Pancreas (tissue), 10 donors: ENCODE measurements at regions of chr17 and their contacts with region 1.

Region 1: DNA sequence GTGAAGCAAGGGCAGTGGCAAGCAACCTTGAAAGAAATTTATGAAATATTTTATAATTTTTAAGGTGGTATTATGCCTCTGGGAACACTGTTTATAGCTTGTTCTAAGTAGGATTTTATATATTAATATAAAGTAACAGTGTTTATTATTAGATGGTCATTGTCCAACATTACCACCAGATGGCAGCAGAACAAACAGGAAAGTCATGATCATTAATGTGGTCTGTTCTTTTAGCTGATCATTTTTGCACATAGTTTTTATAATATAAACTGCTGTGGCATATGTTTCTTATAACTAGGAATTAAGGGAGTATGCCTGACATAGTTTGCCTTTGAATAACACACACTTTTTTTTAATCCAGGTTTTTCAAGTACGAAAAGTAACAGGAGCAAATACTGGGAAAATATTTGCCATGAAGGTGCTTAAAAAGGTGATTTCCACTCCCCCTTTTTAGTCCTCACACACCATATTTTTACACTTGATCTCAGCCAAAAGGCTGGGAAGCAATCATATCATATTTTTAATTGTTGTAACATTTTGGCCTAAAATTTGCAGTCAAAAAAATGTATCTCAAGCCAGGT is 21.4 kb downstream of the RPS6KB1 start:
- DNase-seq: no peak
- ATAC-seq: peak; percentile 54 to 84 (median 79)
- H3K4me3 ChIP-seq: no peak overlapping the region
- H3K27ac ChIP-seq: no peak overlapping the region
- H3K4me1 ChIP-seq: peaks cover 0 to 5% (median 0%) of the 10 kb centered on the region in 3 donors
- H3K27me3 ChIP-seq: no peaks in the 10 kb centered on the region
- CTCF ChIP-seq: peak; percentile 42 to 54 (median 48)

Region 2: GRCh38 chr17:59565970-59566602 is 348.3 kb before region 1 on chr17:
- intact Hi-C with region 1: no loop called
- DNase-seq: peak; percentile 62 to 82 (median 74)
- ATAC-seq: peak; percentile 91 to 95 (median 94)
- H3K4me3 ChIP-seq: peak overlapping the region; percentile 78 to 93 (median 91)
- H3K27ac ChIP-seq: peak overlapping the region; percentile 44 to 80 (median 69)
- H3K4me1 ChIP-seq: peaks cover 6 to 10% (median 7%) of the 10 kb centered on the region in 3 donors
- H3K27me3 ChIP-seq: no peaks in the 10 kb centered on the region
- CTCF ChIP-seq: no peak

Region 3: DNA sequence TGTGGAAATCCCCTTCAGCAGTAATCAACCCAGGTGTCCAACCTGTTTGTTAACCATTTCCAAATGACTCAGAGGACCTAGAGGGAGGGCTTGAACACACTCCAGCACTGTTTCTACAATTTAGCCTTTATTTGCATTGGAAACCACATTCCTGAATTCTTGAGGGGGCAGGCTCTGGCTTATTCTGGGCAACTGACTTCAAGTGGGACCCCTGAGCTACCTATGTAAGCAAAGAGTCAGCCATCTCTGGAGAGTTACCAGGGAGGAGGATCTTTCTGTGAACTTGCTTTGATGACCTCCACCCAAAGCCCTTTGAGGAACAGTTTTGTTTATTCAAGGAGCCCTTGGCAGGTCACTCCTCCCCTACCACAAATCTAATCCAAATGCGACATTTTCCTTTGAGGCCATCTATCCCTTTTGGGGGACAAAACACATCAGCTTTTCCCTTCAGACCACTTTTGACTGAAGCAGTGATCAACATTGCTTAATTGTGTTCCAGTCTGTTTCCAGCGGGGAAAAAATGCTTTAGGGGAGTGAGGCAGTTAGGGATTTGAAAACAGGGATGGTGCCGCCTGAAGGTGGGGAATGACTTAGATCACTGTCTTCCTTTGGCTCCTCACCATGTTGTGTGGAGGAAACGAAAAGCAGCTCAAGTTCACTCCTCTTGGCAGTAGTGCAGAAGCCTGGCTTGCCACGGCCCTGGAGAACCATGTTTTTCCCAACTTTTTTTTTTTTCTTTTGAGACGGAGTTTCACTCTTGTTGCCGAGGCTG is 67.8 kb before region 1 on chr17:
- intact Hi-C with region 1: no loop called
- DNase-seq: peak in 3 of 6 donors; percentile 54 to 64 (median 58)
- ATAC-seq: peak; percentile 47 to 59 (median 54)
- H3K4me3 ChIP-seq: peak overlapping the region in 1 of 4 donors; percentile 6
- H3K27ac ChIP-seq: peak overlapping the region; percentile 75 to 99 (median 85)
- H3K4me1 ChIP-seq: peaks cover 47 to 58% (median 57%) of the 10 kb centered on the region in 3 donors
- H3K27me3 ChIP-seq: no peaks in the 10 kb centered on the region
- CTCF ChIP-seq: no peak

Region 4: DNA sequence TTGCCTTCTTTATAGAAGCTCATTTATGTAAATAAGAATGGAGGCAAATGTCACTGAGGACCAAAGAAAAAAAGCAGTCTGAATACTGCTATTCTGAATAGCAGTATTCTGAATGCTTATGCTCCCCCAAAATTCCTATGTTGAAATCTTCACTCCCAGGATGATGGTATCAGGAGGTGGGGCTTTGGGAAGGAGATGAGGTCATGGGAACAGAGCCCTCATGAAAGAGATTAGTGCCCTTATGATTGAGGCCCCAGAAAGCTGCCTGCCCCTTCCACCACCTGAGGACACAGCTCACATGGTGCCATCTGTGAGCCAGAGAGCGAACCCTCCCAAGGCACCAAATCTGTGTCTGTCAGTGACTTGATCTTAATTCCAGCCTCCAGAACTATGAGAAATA is 135.6 kb after region 1 on chr17:
- intact Hi-C with region 1: loop called in 1 of 3 experiments (anchors 10 kb)
- DNase-seq: no peak
- ATAC-seq: no peak
- H3K4me3 ChIP-seq: no peak overlapping the region
- H3K27ac ChIP-seq: no peak overlapping the region
- H3K4me1 ChIP-seq: no peaks in the 10 kb centered on the region
- H3K27me3 ChIP-seq: no peaks in the 10 kb centered on the region
- CTCF ChIP-seq: no peak